ENCODE measurements at regions of chr18 and their contacts with region 1.

Region 1: GRCh38 chr18:36942264-36942663 is 113.3 kb downstream of the KIAA1328 start:
- DNase-seq: peak; percentile 37
- H3K4me3 ChIP-seq: peak overlapping the region in 1 of 2 experiments; percentile 12; a peak in 1 of 4 replicates
- H3K27ac ChIP-seq: no peak overlapping the region
- H3K4me1 ChIP-seq: no peaks in the 10 kb centered on the region
- H3K27me3 ChIP-seq: no peaks in the 10 kb centered on the region
- CTCF ChIP-seq: peak; percentile 61
- EP300 ChIP-seq: no peak
- RAD21 ChIP-seq: peak; percentile 79

Region 2: DNA sequence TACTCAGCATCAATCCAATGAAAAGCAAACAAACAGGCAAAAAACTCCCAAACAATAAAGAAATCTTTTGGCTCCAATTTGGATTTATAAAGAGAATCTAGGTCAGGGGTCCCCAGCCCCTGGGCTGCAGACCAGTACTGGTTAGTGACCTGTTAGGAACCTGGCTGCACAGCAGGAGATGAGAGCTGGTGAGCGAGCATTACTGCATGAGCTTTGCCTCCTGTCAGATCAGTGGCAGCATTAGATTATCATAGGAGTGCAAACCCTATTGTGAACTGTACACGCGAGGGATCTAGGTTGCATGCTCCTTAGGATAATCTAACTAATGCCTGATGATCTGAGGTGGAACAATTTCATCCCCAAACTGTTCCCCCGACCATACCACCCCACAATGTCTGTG is 11.2 kb before region 1 on chr18:
- CTCF ChIA-PET with region 1: interaction called, 12 read pairs
- POLR2A ChIA-PET with region 1: no interaction called
- DNase-seq: no peak
- H3K4me3 ChIP-seq: no peak overlapping the region
- H3K27ac ChIP-seq: no peak overlapping the region
- H3K4me1 ChIP-seq: no peaks in the 10 kb centered on the region
- H3K27me3 ChIP-seq: no peaks in the 10 kb centered on the region
- CTCF ChIP-seq: no peak
- EP300 ChIP-seq: no peak
- RAD21 ChIP-seq: no peak

Region 3: DNA sequence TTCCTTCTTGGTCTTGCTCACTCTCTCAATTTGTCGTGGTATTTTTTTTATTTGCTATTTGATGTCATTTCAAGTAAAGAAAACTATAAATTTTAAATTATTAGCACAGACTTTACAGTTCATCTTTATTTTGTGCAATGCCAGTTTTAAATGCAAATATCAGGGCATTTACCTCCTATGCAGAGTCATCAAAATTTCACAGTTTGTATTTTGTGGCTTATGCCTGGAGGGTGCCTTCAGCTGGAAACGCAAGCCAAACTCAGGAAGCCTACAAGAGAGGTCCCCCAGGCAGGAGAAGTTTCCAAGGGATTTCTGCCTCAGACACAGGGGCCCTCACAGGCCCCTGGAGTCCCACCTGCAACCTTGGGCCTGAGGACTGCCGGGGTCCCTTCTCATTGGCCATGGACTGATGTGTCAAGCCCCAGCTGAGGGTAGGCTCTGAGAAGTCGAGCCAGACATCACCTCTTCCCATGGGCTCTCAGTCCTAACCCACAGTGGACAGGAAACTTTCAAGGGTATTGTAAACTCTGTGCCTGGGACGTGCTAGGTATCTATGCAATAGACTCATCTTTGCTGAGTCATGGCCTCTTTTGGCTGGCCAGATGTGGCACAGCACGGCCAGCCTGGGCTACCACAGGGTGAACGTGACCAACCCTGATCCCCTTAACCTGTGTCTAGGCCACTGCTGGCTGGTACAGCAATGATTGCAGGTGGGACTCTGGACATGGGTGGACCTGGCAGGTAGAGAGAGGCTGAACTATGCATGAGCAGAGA is 386.9 kb after region 1 on chr18:
- CTCF ChIA-PET with region 1: interaction called, 16 read pairs
- POLR2A ChIA-PET with region 1: no interaction called
- DNase-seq: no peak
- H3K4me3 ChIP-seq: no peak overlapping the region
- H3K27ac ChIP-seq: no peak overlapping the region
- H3K4me1 ChIP-seq: peaks cover 1 to 52% of the 10 kb centered on the region in 2 experiments; a peak in 1 of 4 replicates
- H3K27me3 ChIP-seq: no peaks in the 10 kb centered on the region
- CTCF ChIP-seq: no peak
- EP300 ChIP-seq: no peak
- RAD21 ChIP-seq: no peak

Region 4: GRCh38 chr18:37335409-37335736 is 393.1 kb after region 1 on chr18:
- CTCF ChIA-PET with region 1: interaction called, 16 read pairs
- POLR2A ChIA-PET with region 1: no interaction called
- DNase-seq: peak; percentile 87
- H3K4me3 ChIP-seq: no peak overlapping the region; a peak in 1 of 4 replicates
- H3K27ac ChIP-seq: peak overlapping the region in 1 of 2 experiments; percentile 91; a peak in 2 of 4 replicates
- H3K4me1 ChIP-seq: peaks cover 7 to 54% of the 10 kb centered on the region in 2 experiments; a peak in 2 of 4 replicates
- H3K27me3 ChIP-seq: no peaks in the 10 kb centered on the region
- CTCF ChIP-seq: peak; percentile 54
- EP300 ChIP-seq: no peak
- RAD21 ChIP-seq: peak; percentile 78